Activated T-helper 1 cell treated with anti-CD3 and anti-CD28 coated beads, Interleukin-12 subunit alpha, Interleukin-12 subunit beta, Interleukin-2, Interleukin-4 antibody, amounts not matched to agents 30 ng/mL and 10 ng/mL and 1 ng/mL, durations not matched to agents 14 hours and 24 hours and 36 hours (primary cell): ENCODE measurements at regions of chr12 and their contacts with region 1.

Region 1: GRCh38 chr12:46661110-46661845 is 164.5 kb downstream of the SLC38A4 start:
- DNase-seq: no peak
- H3K4me3 Mint-ChIP-seq: no peak overlapping the region
- H3K27ac Mint-ChIP-seq: no peak overlapping the region
- H3K4me1 Mint-ChIP-seq: peaks cover 54% of the 10 kb centered on the region
- H3K27me3 Mint-ChIP-seq: no peaks in the 10 kb centered on the region

Region 2: GRCh38 chr12:46153268-46153872 is 507.9 kb before region 1 on chr12:
- intact Hi-C with region 1: loop called (anchors 5 kb)
- DNase-seq: no peak
- H3K4me3 Mint-ChIP-seq: no peak overlapping the region
- H3K27ac Mint-ChIP-seq: no peak overlapping the region
- H3K4me1 Mint-ChIP-seq: no peaks in the 10 kb centered on the region
- H3K27me3 Mint-ChIP-seq: peaks cover 6% of the 10 kb centered on the region

Region 3: DNA sequence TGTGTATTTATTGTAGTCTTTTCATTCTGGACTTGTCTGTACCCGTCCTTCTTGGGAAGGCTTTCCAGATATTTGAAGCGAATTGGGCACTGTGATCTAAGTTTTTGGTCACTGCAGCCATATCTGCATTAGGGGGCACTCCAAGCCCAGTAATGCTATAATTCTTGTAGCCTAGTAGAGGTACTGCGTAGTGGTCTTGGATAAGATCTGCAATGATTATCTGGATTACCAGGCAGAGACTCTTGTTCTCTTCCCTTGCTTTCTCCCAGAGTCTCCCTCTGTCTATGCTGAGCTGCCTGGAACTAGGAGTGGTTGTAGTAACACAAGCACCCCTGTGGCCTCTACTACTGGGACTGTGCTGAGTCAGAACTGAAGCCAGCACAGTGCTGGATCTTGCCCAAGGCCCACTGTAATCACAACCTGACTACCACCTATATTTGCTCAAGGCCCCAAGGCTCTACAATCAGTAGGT is 318.7 kb before region 1 on chr12:
- intact Hi-C with region 1: loop called (anchors 1 kb)
- DNase-seq: no peak
- H3K4me3 Mint-ChIP-seq: no peak overlapping the region
- H3K27ac Mint-ChIP-seq: no peak overlapping the region
- H3K4me1 Mint-ChIP-seq: no peaks in the 10 kb centered on the region
- H3K27me3 Mint-ChIP-seq: peaks cover 9% of the 10 kb centered on the region

Region 4: DNA sequence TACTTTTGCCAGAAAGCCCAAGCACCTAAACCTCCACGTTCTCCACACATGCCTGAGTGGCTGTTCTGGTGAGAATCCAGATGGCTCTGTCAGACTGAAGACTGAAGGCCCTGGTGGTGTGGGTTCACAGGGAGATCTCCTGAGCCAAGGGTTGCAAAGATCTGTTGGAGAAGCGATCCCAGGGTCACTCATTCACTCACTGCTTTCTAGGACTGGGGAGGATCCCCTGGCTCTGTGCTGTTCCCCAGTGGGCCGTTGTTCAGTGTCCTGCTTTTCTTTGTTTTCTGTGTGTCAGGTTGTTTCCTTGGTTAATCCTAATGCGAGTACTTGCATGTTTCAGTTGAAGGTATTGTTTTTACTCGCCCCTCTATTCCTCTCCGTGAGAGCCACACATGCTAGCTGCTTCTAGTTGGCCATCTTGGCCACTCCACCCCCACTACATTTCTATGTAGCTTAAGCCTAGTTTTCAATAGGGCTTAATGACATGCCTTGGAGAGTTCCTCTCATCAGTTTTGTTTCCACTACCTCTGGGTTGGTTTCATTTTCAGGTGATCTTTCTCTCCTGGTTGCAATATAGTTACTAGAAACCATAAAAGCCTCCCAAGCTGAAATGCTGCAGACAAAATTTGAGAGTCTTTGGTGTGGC is 144.2 kb before region 1 on chr12:
- intact Hi-C with region 1: loop called (anchors 2 kb)
- DNase-seq: no peak
- H3K4me3 Mint-ChIP-seq: peak overlapping the region; percentile 74
- H3K27ac Mint-ChIP-seq: peak overlapping the region; percentile 98
- H3K4me1 Mint-ChIP-seq: peaks cover 60% of the 10 kb centered on the region
- H3K27me3 Mint-ChIP-seq: no peaks in the 10 kb centered on the region

Region 5: GRCh38 chr12:46523863-46524770 is 137.2 kb before region 1 on chr12:
- intact Hi-C with region 1: loop called (anchors 1 kb)
- DNase-seq: peak; percentile 48
- H3K4me3 Mint-ChIP-seq: peak overlapping the region; percentile 81
- H3K27ac Mint-ChIP-seq: peak overlapping the region; percentile 99
- H3K4me1 Mint-ChIP-seq: peaks cover 52% of the 10 kb centered on the region
- H3K27me3 Mint-ChIP-seq: no peaks in the 10 kb centered on the region

Region 6: GRCh38 chr12:46546634-46547286 is 114.5 kb before region 1 on chr12:
- intact Hi-C with region 1: loop called (anchors 2 kb)
- DNase-seq: peak; percentile 19
- H3K4me3 Mint-ChIP-seq: peak overlapping the region; percentile 34
- H3K27ac Mint-ChIP-seq: peak overlapping the region; percentile 89
- H3K4me1 Mint-ChIP-seq: peaks cover 58% of the 10 kb centered on the region
- H3K27me3 Mint-ChIP-seq: no peaks in the 10 kb centered on the region

Region 7: DNA sequence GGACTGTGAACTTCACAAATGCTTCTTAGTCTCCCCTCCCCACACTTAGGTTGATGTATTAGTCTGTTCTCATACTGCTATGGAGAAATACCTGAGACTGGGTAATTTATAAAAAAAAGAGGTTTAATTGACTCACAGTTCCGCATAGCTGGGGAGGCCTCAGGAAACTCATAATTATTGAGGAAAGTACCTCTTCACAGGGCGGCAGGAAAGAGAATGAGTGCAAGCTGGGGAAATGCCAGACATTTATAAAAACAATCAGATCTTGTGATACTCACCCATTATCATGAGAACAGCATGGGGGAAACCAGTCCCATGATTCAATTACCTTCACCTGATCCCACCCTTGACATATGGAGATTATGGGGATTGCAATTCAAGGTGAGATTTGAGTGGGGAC is 14.2 kb before region 1 on chr12:
- intact Hi-C with region 1: no loop called
- DNase-seq: no peak
- H3K4me3 Mint-ChIP-seq: no peak overlapping the region
- H3K27ac Mint-ChIP-seq: no peak overlapping the region
- H3K4me1 Mint-ChIP-seq: no peaks in the 10 kb centered on the region
- H3K27me3 Mint-ChIP-seq: peaks cover 3% of the 10 kb centered on the region